HCT116 (cell line): ENCODE measurements at regions of chr5 and their contacts with region 1.

Region 1: DNA sequence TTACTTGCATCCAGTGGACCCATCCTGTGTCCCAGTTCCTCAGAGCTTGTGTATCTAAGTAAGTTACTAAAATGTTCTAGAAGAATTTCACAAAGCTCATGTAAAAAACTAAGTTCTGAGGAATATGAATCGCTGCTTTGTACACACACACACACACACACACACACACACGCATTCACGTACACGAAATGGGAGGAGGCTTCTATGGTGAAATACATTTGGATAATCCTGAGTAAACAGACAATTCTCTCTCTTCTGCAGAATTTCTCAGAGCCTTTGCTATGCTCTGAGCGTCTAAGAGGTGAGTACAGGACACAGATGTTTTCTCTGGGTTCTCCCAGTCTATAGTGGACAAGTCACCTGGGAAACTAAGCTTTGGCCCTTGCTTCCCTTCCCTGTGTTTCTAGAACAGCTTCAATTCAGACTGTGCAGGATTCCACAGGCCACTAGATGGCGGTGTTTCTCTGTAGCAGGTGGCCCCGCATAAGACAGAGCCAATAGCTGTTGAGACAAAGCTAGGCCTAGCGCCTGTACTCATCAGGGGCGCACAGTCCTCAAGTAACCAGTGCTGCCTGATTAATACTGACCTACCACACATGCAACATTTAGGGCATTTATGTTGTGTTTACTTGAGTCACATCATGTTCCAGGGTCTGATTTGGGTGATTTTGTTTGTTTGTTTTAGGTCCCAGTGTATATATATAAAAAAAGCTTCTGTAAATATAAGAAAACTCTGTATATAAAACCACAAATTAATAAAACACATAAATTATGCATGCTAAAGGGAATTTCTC is 114.8 kb downstream of the LIFR start:
- DNase-seq: peak; percentile 90
- ATAC-seq: peak; percentile 100
- H3K4me3 ChIP-seq: no peak overlapping the region
- H3K27ac ChIP-seq: no peak overlapping the region
- H3K4me1 ChIP-seq: no peaks in the 10 kb centered on the region
- H3K27me3 ChIP-seq: no peaks in the 10 kb centered on the region
- CTCF ChIP-seq: peak; percentile 94 to 98 (median 94)
- POLR2A ChIP-seq: no peak
- RAD21 ChIP-seq: peak; percentile 99

Region 2: GRCh38 chr5:38208782-38209378 is 232.8 kb before region 1 on chr5:
- CTCF ChIA-PET with region 1: interaction called, 17 read pairs
- POLR2A ChIA-PET with region 1: no interaction called
- RAD21 ChIA-PET with region 1: no interaction called
- intact Hi-C with region 1: no loop called
- DNase-seq: peak; percentile 47
- ATAC-seq: peak; percentile 78
- H3K4me3 ChIP-seq: no peak overlapping the region
- H3K27ac ChIP-seq: no peak overlapping the region
- H3K4me1 ChIP-seq: peaks cover 0 to 3% of the 10 kb centered on the region in 2 experiments; a peak in 1 of 4 replicates
- H3K27me3 ChIP-seq: no peaks in the 10 kb centered on the region
- CTCF ChIP-seq: peak; percentile 57 to 69 (median 59); a peak in 4 of 6 replicates
- POLR2A ChIP-seq: no peak
- RAD21 ChIP-seq: peak; percentile 87

Region 3: DNA sequence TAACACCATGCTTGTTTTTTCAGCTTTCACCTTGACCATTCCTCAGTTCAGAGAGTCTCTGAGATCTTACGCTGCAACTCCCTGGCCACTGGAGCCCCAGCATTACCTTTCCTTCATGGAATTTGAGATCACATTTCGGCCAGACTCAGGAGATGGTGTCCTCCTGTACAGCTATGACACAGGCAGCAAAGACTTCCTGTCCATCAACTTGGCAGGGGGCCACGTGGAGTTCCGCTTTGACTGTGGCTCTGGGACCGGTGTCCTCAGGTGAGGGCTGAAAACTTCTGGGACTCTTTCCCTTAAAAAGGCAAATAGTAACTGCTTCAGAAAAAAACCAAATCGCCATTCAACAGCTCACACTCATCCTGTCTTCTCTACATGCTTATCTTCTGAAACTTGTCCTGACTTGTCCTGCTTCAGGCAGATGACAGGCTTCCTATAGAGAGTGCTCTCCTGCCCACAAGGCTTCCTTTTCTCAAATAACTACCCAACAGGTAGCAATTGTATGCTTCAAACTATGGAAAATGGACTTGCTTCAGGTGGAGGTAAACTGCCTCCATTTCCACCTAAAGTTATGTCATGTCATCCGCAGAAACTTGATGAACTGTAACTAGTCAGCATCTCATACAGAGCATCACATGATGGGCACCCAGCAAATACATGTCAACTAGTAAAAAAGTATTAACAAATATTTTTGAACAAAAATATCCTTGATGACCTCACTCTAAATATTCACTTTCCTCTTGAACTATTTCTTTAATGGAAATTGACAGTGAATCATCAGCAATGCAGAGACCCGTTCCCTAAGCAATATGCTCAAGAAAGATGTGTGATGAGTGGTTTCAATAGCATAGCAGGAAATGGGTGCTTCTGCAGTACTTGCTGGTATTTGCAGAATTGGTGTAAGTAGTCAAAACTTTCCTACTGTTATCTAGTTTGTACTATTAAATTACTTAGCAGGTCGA is 14.4 kb before region 1 on chr5:
- CTCF ChIA-PET with region 1: interaction called, 11 read pairs
- POLR2A ChIA-PET with region 1: no interaction called
- RAD21 ChIA-PET with region 1: interaction called in 1 of 2 experiments, 3 read pairs
- intact Hi-C with region 1: no loop called
- DNase-seq: no peak
- ATAC-seq: no peak
- H3K4me3 ChIP-seq: no peak overlapping the region
- H3K27ac ChIP-seq: no peak overlapping the region
- H3K4me1 ChIP-seq: peaks cover 4 to 19% of the 10 kb centered on the region in 2 experiments; a peak in 3 of 4 replicates
- H3K27me3 ChIP-seq: no peaks in the 10 kb centered on the region
- CTCF ChIP-seq: no peak
- POLR2A ChIP-seq: no peak
- RAD21 ChIP-seq: no peak

Region 4: DNA sequence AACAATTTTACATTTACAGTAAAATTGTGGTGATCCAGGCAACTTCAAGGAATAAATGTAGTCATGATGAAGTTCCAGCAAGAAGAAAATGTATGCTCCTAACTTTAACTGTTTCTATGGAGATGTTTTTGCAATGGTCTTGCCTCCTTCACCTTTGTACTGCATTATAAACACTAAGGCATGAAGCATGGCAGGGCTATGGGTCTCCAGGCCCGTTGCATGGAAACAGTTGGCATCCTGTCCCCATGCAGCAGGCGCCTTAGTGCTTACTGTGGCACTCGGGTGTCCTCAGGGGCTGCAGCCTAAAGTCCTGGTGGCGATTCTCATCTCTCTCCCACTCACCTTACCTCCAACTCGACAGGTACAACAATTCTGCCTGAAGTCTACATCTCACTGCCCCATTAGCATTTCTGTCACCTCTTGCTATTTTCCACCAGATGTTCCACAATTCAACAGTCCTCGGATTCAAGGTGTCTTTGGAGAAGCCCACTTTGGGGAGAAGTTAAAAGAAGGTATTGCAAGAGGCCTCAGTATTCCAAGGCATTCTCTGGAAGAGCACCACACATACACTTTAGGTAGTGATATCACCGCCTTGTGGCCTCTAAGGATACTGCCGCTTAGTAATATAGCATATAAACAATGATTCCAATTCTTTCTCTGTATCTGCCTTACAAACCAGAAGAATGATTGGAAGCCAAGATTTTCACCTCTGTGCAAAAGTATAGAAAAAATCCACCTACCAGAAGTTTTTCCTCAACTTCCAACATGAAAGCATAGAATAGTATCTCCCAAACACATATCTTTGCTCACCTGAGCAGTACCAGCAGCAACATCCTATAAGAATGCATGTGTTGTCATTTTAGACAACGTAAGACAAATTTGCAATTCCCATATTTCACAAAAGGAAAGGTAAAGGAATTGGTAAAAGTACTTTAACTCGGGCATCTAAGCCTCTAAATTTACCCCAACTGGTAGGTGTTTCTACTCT is 109.7 kb after region 1 on chr5:
- CTCF ChIA-PET with region 1: interaction called, 39 read pairs
- POLR2A ChIA-PET with region 1: no interaction called
- RAD21 ChIA-PET with region 1: interaction called, 7 to 9 read pairs
- intact Hi-C with region 1: loop called (anchors 2 kb)
- DNase-seq: peak; percentile 23
- ATAC-seq: peak; percentile 67
- H3K4me3 ChIP-seq: no peak overlapping the region
- H3K27ac ChIP-seq: no peak overlapping the region
- H3K4me1 ChIP-seq: peaks cover 12 to 28% of the 10 kb centered on the region in 2 experiments; a peak in 3 of 4 replicates
- H3K27me3 ChIP-seq: no peaks in the 10 kb centered on the region
- CTCF ChIP-seq: peak; percentile 50 to 77 (median 68); a peak in 5 of 6 replicates
- POLR2A ChIP-seq: no peak
- RAD21 ChIP-seq: peak; percentile 61

Region 5: DNA sequence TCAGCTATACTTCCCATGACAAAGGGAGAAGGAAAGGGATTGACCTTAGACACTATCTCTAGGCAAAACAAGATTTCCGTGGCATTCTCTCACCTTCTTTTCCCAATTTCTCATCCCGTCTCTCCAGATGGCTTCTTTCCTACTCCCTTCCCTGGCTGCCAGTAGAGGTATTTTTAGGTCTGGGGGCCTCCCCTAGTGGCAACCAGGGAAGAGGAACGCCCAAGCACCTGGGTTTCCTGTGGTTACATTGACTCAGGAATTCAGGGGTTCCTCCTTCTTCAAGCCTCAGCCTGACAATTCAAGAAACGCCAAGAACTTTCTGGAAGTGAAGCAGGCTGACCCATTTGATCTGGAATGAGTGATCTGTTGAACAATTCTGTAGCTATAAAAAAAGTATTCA is 292.7 kb after region 1 on chr5:
- CTCF ChIA-PET with region 1: interaction called, 10 read pairs
- POLR2A ChIA-PET with region 1: no interaction called
- RAD21 ChIA-PET with region 1: no interaction called
- intact Hi-C with region 1: no loop called
- DNase-seq: no peak
- ATAC-seq: no peak
- H3K4me3 ChIP-seq: no peak overlapping the region
- H3K27ac ChIP-seq: no peak overlapping the region
- H3K4me1 ChIP-seq: peaks cover 0 to 3% of the 10 kb centered on the region in 2 experiments; a peak in 1 of 4 replicates
- H3K27me3 ChIP-seq: no peaks in the 10 kb centered on the region
- CTCF ChIP-seq: peak in 1 of 3 experiments; percentile 25; a peak in 2 of 6 replicates
- POLR2A ChIP-seq: no peak
- RAD21 ChIP-seq: peak; percentile 18; the same call in 1 of the 2 replicates

Region 6: DNA sequence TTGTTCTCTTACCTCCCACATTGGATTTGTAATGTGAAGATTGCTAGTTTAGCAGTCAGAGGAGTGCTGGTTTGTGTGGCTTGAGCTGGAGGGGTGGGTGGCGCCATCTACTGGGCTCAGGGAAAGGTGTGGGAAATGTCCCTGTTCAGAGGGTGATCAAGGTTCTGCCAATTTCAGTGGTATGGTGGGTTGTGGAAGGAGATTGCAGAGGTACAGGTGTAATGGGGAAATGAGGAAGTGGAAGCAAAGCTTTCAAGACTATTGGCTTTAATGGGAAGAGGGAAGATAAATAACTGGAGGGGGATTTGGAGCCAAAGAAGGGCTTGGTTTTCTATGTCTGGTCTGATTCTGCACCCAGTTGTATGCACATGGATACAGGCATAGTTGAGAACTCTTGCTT is 480.5 kb after region 1 on chr5:
- CTCF ChIA-PET with region 1: interaction called, 13 read pairs
- POLR2A ChIA-PET with region 1: no interaction called
- RAD21 ChIA-PET with region 1: interaction called in 1 of 2 experiments, 3 read pairs
- intact Hi-C with region 1: loop called (anchors 5 kb)
- DNase-seq: peak; percentile 22
- ATAC-seq: peak; percentile 94
- H3K4me3 ChIP-seq: no peak overlapping the region
- H3K27ac ChIP-seq: no peak overlapping the region
- H3K4me1 ChIP-seq: no peaks in the 10 kb centered on the region
- H3K27me3 ChIP-seq: no peaks in the 10 kb centered on the region
- CTCF ChIP-seq: peak; percentile 63 to 97 (median 90); a peak in 5 of 6 replicates
- POLR2A ChIP-seq: no peak
- RAD21 ChIP-seq: peak; percentile 85